Psoas muscle (tissue), 8 donors: ENCODE measurements at regions of chr2 and their contacts with region 1.

Region 1: GRCh38 chr2:26126074-26126473 is 46.8 kb upstream of the GAREM2 start:
- DNase-seq: no peak
- ATAC-seq: peak in 2 of 4 donors; percentile 34 to 53
- H3K4me3 ChIP-seq: peak overlapping the region; percentile 22
- H3K27ac ChIP-seq: peak overlapping the region; percentile 66
- H3K4me1 ChIP-seq: peaks cover 80% of the 10 kb centered on the region
- H3K27me3 ChIP-seq: no peaks in the 10 kb centered on the region
- CTCF ChIP-seq: no peak

Region 2: DNA sequence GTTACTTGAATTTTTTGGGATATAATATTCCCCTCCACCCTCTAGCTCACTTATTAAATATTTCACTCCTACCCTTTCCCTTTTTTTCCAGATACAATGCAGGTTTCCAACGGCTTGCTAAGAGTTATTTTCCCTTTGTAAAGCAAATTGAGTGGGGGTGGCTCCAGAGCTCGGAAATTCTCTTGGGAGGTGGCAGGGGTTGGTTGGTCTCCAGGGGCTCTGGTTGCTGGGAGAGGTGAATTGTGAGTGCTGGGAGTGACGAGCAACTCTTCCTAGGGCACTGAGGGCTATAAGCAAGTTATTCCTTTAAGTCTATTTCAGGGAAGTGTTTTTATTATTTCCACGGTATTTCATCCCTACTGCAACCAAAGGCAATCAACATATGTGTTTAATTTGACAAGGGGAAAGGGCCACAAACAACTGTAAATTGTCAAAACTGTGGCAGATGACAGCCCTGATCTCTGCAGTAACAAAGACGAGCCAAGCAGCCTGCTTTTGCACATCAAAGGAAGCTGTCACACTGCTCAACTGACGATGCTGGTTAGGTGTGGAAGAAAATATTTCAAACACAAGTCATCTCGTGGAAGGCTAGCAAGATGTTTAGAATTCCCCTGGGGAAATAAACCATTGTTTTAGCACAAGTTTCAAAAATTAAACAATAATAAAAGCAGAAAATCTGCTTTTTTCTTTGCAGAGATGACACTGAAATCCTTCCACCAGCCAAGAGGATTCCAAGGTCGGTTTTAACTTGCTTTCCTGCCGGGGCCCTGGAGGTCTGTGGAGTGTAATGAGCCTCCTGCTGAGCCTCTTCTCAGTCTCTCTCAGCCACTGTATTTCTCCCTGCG is 213.0 kb before region 1 on chr2:
- intact Hi-C with region 1: no loop called
- DNase-seq: no peak
- ATAC-seq: no peak
- H3K4me3 ChIP-seq: no peak overlapping the region
- H3K27ac ChIP-seq: no peak overlapping the region
- H3K4me1 ChIP-seq: no peaks in the 10 kb centered on the region
- H3K27me3 ChIP-seq: no peaks in the 10 kb centered on the region
- CTCF ChIP-seq: no peak

Region 3: GRCh38 chr2:26088032-26088643 is 37.9 kb before region 1 on chr2:
- intact Hi-C with region 1: loop called in 1 of 2 experiments (anchors 5 kb)
- DNase-seq: no peak
- ATAC-seq: peak; percentile 57 to 81 (median 65)
- H3K4me3 ChIP-seq: no peak overlapping the region
- H3K27ac ChIP-seq: peak overlapping the region; percentile 70
- H3K4me1 ChIP-seq: peaks cover 42% of the 10 kb centered on the region
- H3K27me3 ChIP-seq: no peaks in the 10 kb centered on the region
- CTCF ChIP-seq: peak; percentile 83

Region 4: GRCh38 chr2:26099933-26100332 is 26.1 kb before region 1 on chr2:
- intact Hi-C with region 1: loop called in 1 of 2 experiments (anchors 5 kb)
- DNase-seq: no peak
- ATAC-seq: peak; percentile 61 to 89 (median 86)
- H3K4me3 ChIP-seq: peak overlapping the region; percentile 39
- H3K27ac ChIP-seq: peak overlapping the region; percentile 84
- H3K4me1 ChIP-seq: peaks cover 62% of the 10 kb centered on the region
- H3K27me3 ChIP-seq: no peaks in the 10 kb centered on the region
- CTCF ChIP-seq: no peak

Region 5: GRCh38 chr2:26184555-26185303 is 58.7 kb after region 1 on chr2:
- intact Hi-C with region 1: no loop called
- DNase-seq: peak; percentile 87 to 94
- ATAC-seq: peak; percentile 76 to 87 (median 78)
- H3K4me3 ChIP-seq: peak overlapping the region; percentile 76
- H3K27ac ChIP-seq: no peak overlapping the region
- H3K4me1 ChIP-seq: no peaks in the 10 kb centered on the region
- H3K27me3 ChIP-seq: peaks cover 0 to 4% (median 0%) of the 10 kb centered on the region in 3 donors
- CTCF ChIP-seq: peak; percentile 59